ENCODE measurements at regions of chr1 and their contacts with region 1.

Region 1: GRCh38 chr1:9651565-9652378 is at the start of gene PIK3CD:
- DNase-seq: peak; percentile 50
- ATAC-seq: peak; percentile 11
- H3K4me3 Mint-ChIP-seq: peak within 1 kb of the TSS; percentile 96
- H3K27ac Mint-ChIP-seq: peak within 1 kb of the TSS; percentile 99
- H3K4me1 Mint-ChIP-seq: peaks cover 52% of the 10 kb centered on the region
- H3K27me3 Mint-ChIP-seq: no peaks in the 10 kb centered on the region
- CTCF ChIP-seq: no peak
- total RNA-seq, gene PIK3CD: 238 and 265 TPM in 2 replicates

Region 2: DNA sequence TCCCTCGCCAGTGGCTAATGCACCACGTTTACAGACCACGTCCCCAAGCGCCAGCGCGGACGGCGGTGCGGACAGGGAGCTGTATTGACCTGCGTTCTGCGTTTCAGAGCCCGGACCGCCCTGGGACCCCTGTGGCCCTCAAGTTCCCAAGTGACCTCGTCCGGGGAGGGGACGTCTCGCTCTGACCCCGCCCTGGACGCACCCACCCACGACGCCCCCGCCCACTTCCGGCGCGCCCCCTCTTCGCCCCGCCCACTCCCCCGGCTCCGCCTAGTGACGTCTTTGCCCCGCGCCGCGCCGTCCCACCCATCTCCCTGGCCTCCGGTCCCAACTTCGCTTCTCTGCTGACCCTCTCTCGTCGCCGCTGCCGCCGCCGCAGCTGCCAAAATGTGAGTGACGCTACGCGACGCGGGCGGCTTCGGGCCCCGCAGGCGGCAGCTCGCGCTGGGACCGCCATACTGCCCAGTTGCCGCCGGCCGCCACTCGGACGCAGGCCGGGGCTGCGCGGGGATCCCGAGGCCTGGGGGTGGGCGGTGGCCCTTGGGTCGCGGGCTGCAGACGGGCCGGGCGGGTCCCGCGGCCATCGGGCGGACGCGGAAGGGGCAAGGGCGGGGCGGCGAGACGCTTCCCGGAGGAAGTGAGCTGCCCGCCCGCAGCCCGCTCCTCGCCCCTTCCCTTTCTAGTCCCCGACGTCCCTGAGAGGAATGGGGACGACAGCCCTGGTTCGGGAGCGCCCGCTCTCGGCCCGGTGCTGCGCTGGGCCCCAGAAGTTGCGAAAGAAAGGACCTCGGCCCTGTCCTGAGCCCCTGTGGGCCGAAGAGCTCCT is 1880.6 kb before region 1 on chr1 and contains the start of gene VAMP3:
- CTCF ChIA-PET with region 1: no interaction called
- POLR2A ChIA-PET with region 1: no interaction called
- intact Hi-C with region 1: no loop called
- DNase-seq: peak; percentile 86
- ATAC-seq: peak; percentile 96
- H3K4me3 Mint-ChIP-seq: peak within 1 kb of the TSS; percentile 87
- H3K27ac Mint-ChIP-seq: peak within 1 kb of the TSS; percentile 77
- H3K4me1 Mint-ChIP-seq: peaks cover 32% of the 10 kb centered on the region
- H3K27me3 Mint-ChIP-seq: no peaks in the 10 kb centered on the region
- CTCF ChIP-seq: no peak
- total RNA-seq, gene VAMP3: 20.7 and 31.8 TPM in 2 replicates

Region 3: DNA sequence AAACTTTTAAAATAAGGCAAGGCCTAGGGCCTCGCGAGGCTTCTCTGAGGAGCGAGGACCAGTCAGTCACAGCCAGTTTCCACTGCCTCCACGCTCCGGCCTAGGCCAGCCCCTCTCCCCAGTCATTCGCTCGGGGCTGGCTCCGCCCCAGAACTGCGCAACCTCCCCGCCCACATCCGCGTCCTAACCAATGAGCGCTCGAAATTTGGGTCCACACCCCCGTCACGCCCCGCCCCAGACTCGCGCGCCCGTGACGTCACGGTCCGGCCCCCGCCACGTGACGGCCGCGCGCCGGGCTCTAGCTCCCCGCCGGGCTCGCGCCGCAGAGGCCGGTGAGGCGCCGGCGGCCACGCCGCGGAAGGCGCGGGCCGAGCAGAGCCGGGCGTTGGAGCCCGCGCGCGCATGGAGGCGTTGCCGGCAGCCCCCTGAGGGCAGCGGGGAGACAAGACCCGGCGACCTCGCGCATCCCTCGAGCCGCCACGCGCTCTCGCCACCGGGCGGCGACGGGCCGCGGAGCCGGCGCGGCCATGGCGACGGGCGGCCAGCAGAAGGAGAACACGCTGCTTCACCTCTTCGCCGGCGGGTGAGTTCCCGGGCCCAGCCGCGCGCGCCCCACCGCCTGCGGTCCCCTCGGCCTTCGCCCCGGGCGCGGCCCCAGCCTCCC is 112.5 kb before region 1 on chr1 and contains the start of gene SLC25A33:
- CTCF ChIA-PET with region 1: no interaction called
- POLR2A ChIA-PET with region 1: interaction called, 4 read pairs
- intact Hi-C with region 1: loop called (anchors 1 kb)
- DNase-seq: peak; percentile 99
- ATAC-seq: peak; percentile 96
- H3K4me3 Mint-ChIP-seq: peak within 1 kb of the TSS; percentile 92
- H3K27ac Mint-ChIP-seq: peak within 1 kb of the TSS; percentile 90
- H3K4me1 Mint-ChIP-seq: peaks cover 29% of the 10 kb centered on the region
- H3K27me3 Mint-ChIP-seq: no peaks in the 10 kb centered on the region
- CTCF ChIP-seq: no peak
- total RNA-seq, gene SLC25A33: 6.5 and 7.5 TPM in 2 replicates

Region 4: GRCh38 chr1:9665193-9665592 is 13.4 kb after region 1 on chr1:
- CTCF ChIA-PET with region 1: interaction called, 4 read pairs
- POLR2A ChIA-PET with region 1: interaction called, 57 read pairs
- intact Hi-C with region 1: loop called (anchors 1 kb)
- DNase-seq: no peak
- ATAC-seq: no peak
- H3K4me3 Mint-ChIP-seq: no peak overlapping the region
- H3K27ac Mint-ChIP-seq: peak overlapping the region; percentile 46
- H3K4me1 Mint-ChIP-seq: peaks cover 58% of the 10 kb centered on the region
- H3K27me3 Mint-ChIP-seq: no peaks in the 10 kb centered on the region
- CTCF ChIP-seq: no peak

Region 5: DNA sequence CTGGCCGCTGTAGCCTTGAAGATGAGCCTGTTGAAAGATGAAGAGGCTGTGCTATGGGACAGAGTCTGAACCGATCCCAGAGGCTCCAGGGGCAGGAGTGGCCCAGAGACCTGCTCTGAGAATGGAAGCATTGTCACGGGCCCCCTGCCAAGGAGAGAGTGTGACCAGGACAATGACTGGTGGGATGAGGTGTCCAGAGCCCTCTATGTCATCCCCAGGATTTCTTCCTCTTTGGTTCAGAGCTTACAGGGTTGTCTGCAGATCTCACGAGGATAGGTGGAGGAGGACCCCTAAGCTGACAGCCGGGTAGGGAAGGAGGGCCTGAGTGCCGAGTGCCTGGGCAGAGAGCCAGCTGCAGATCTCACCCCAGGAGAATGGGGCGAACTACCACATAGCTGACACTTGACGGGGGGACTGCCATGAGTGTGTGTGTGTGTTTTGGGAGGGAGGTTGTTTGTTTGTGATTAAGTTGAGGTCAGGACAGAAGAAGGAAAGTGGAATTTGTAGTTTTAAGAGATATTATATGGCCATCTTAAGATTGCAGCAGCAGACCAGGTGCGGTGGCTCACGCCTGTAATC is 25.1 kb after region 1 on chr1:
- CTCF ChIA-PET with region 1: interaction called, 8 read pairs
- POLR2A ChIA-PET with region 1: interaction called, 24 read pairs
- intact Hi-C with region 1: no loop called
- DNase-seq: no peak
- ATAC-seq: no peak
- H3K4me3 Mint-ChIP-seq: peak overlapping the region; percentile 15
- H3K27ac Mint-ChIP-seq: peak overlapping the region; percentile 38
- H3K4me1 Mint-ChIP-seq: peaks cover 71% of the 10 kb centered on the region
- H3K27me3 Mint-ChIP-seq: no peaks in the 10 kb centered on the region
- CTCF ChIP-seq: no peak

Region 6: GRCh38 chr1:9717193-9718005 is 65.6 kb after region 1 on chr1:
- CTCF ChIA-PET with region 1: interaction called, 5 read pairs
- POLR2A ChIA-PET with region 1: interaction called, 23 read pairs
- intact Hi-C with region 1: loop called (anchors 1 kb)
- DNase-seq: peak; percentile 68
- ATAC-seq: peak; percentile 79
- H3K4me3 Mint-ChIP-seq: peak overlapping the region; percentile 74
- H3K27ac Mint-ChIP-seq: peak overlapping the region; percentile 92
- H3K4me1 Mint-ChIP-seq: peaks cover 50% of the 10 kb centered on the region
- H3K27me3 Mint-ChIP-seq: no peaks in the 10 kb centered on the region
- CTCF ChIP-seq: no peak

Region 7: DNA sequence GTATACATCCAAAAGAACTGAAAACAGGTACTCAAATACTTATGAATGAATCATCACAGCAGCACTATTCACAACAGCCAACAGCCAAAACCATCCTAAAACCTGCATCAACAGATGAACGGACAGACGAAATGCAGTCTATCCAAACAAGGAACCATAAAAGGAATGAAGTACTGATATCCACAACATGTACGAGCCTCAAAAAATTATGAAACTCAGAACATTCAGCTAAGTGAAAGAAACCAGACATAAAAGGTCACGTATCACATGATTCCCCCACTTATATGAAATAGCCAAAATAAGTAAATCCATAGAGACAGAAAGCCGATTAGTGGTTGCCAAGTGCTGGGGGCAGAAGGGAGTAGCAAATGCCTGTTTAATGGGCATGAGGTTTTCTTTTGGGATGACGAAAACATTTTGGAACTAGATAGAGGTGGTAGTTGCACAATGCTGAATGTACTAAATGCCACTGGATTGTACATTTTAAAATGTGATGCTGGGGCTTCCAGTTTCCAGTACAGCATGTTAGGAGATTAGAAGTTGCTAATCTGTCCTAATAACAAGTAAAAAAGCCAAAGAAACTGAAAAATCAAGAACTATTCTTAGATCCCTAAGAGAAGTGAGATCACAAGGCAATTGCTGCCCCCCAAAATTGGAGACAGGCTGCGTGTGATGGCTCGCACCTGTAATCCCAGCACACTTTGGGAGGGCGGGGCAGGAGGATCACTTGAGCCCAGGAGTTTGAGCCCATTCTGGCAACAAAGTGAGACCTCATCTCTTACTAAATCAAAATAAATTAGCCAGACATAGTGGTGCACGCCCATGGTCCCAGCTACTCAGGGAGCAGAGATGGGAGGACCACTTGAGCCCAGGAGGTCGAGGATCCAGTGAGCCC is 146.7 kb after region 1 on chr1:
- CTCF ChIA-PET with region 1: no interaction called
- POLR2A ChIA-PET with region 1: no interaction called
- intact Hi-C with region 1: no loop called
- DNase-seq: no peak
- ATAC-seq: no peak
- H3K4me3 Mint-ChIP-seq: no peak overlapping the region
- H3K27ac Mint-ChIP-seq: no peak overlapping the region
- H3K4me1 Mint-ChIP-seq: peaks cover 46% of the 10 kb centered on the region
- H3K27me3 Mint-ChIP-seq: no peaks in the 10 kb centered on the region
- CTCF ChIP-seq: no peak

Region 8: GRCh38 chr1:9910425-9911178 is 258.8 kb after region 1 on chr1:
- CTCF ChIA-PET with region 1: no interaction called
- POLR2A ChIA-PET with region 1: interaction called, 3 read pairs
- intact Hi-C with region 1: loop called (anchors 1 kb)
- DNase-seq: no peak
- ATAC-seq: peak; percentile 90
- H3K4me3 Mint-ChIP-seq: peak overlapping the region; percentile 97
- H3K27ac Mint-ChIP-seq: peak overlapping the region; percentile 99
- H3K4me1 Mint-ChIP-seq: peaks cover 22% of the 10 kb centered on the region
- H3K27me3 Mint-ChIP-seq: no peaks in the 10 kb centered on the region
- CTCF ChIP-seq: no peak

Region 9: GRCh38 chr1:9922342-9922741 is 270.6 kb after region 1 on chr1:
- CTCF ChIA-PET with region 1: no interaction called
- POLR2A ChIA-PET with region 1: no interaction called
- intact Hi-C with region 1: no loop called
- DNase-seq: no peak
- ATAC-seq: no peak
- H3K4me3 Mint-ChIP-seq: no peak overlapping the region
- H3K27ac Mint-ChIP-seq: no peak overlapping the region
- H3K4me1 Mint-ChIP-seq: peaks cover 6% of the 10 kb centered on the region
- H3K27me3 Mint-ChIP-seq: no peaks in the 10 kb centered on the region
- CTCF ChIP-seq: no peak

Region 10: GRCh38 chr1:11109047-11109760 is 1457.4 kb after region 1 on chr1:
- CTCF ChIA-PET with region 1: no interaction called
- POLR2A ChIA-PET with region 1: no interaction called
- intact Hi-C with region 1: no loop called
- DNase-seq: no peak
- ATAC-seq: no peak
- H3K4me3 Mint-ChIP-seq: no peak overlapping the region
- H3K27ac Mint-ChIP-seq: no peak overlapping the region
- H3K4me1 Mint-ChIP-seq: no peaks in the 10 kb centered on the region
- H3K27me3 Mint-ChIP-seq: no peaks in the 10 kb centered on the region
- CTCF ChIP-seq: no peak

Measured in activated B cell treated with CpG ODN at 0.5 μM for 24 hours (primary cell).